PC-3 (cell line): ENCODE measurements at regions of chr3 and their contacts with region 1.

Region 1: DNA sequence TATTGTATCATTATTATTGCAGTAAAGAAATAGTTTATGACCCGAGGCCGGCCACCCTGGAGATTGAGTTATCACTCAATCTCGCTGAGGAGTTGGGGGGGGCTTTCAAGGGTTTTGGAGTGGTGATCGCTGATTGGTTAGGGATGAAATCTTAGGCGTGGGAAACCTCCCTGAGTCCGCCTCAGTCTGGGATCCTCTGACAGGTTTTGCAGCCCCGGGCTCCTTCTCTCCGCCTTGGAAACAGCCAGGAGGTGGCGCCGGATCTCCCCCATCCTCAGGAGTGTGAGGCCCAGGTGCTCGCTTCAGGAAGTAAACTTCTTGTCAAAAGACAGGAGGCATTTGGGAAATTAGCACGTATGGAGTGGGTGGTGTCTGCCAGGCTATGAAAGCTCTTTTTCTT is 41.1 kb upstream of the SEC61A1 start:
- DNase-seq: peak; percentile 70
- ATAC-seq: peak; percentile 98
- H3K4me3 ChIP-seq: peak overlapping the region; percentile 9; the same call in 1 of the 2 replicates
- H3K27ac ChIP-seq: no peak overlapping the region
- H3K4me1 ChIP-seq: peaks cover 4% of the 10 kb centered on the region
- H3K27me3 ChIP-seq: no peaks in the 10 kb centered on the region
- CTCF ChIP-seq: peak; percentile 75

Region 2: DNA sequence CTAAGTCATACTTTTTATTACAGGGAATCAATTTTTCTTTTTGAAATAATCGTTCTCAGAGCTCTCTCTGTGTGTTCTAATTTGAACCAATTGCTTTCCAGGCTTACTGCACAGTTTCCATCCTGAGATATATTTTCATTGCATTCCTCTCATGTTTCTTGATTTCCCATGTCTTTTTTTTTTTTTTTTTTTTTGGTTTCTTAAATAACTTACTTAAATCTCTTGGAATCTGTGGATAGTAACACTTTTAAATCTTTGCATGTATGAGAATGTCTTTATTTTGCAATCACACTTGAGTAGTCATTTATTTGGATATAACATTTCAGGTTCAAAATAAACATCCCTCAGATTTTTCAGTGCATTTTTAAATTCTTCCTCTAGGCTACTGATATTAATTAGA is 352.9 kb before region 1 on chr3:
- CTCF ChIA-PET with region 1: interaction called, 10 read pairs
- POLR2A ChIA-PET with region 1: no interaction called
- intact Hi-C with region 1: no loop called
- DNase-seq: no peak
- ATAC-seq: no peak
- H3K4me3 ChIP-seq: no peak overlapping the region
- H3K27ac ChIP-seq: no peak overlapping the region
- H3K4me1 ChIP-seq: peaks cover 25% of the 10 kb centered on the region
- H3K27me3 ChIP-seq: no peaks in the 10 kb centered on the region
- CTCF ChIP-seq: no peak

Region 3: GRCh38 chr3:127817396-127817841 is 193.7 kb before region 1 on chr3:
- CTCF ChIA-PET with region 1: no interaction called
- POLR2A ChIA-PET with region 1: no interaction called
- intact Hi-C with region 1: no loop called
- DNase-seq: peak; percentile 92
- ATAC-seq: peak; percentile 57
- H3K4me3 ChIP-seq: no peak overlapping the region
- H3K27ac ChIP-seq: peak overlapping the region; percentile 88
- H3K4me1 ChIP-seq: peaks cover 86% of the 10 kb centered on the region
- H3K27me3 ChIP-seq: no peaks in the 10 kb centered on the region
- CTCF ChIP-seq: no peak

Region 4: GRCh38 chr3:128051837-128052594 is 40.9 kb after region 1 on chr3 and contains the start of gene SEC61A1:
- CTCF ChIA-PET with region 1: no interaction called
- POLR2A ChIA-PET with region 1: no interaction called
- intact Hi-C with region 1: loop called (anchors 2 kb)
- DNase-seq: peak; percentile 93
- ATAC-seq: peak; percentile 91
- H3K4me3 ChIP-seq: peak within 1 kb of the TSS; percentile 87
- H3K27ac ChIP-seq: peak within 1 kb of the TSS; percentile 58
- H3K4me1 ChIP-seq: peaks cover 35% of the 10 kb centered on the region
- H3K27me3 ChIP-seq: no peaks in the 10 kb centered on the region
- CTCF ChIP-seq: no peak
- total RNA-seq, gene SEC61A1: 182 and 184 TPM in 2 replicates